ENCODE measurements at regions of chr1 and their contacts with region 1.

Region 1: GRCh38 chr1:22039594-22040285 is 12.8 kb upstream of the CDC42 start:
- H3K4me3 Mint-ChIP-seq: peak overlapping the region; percentile 51
- H3K27ac Mint-ChIP-seq: peak overlapping the region; percentile 86
- H3K4me1 Mint-ChIP-seq: peaks cover 48% of the 10 kb centered on the region
- H3K27me3 Mint-ChIP-seq: no peaks in the 10 kb centered on the region

Region 2: GRCh38 chr1:22074803-22075202 is 35.1 kb after region 1 on chr1:
- intact Hi-C with region 1: loop called (anchors 5 kb)
- H3K4me3 Mint-ChIP-seq: no peak overlapping the region
- H3K27ac Mint-ChIP-seq: peak overlapping the region; percentile 69
- H3K4me1 Mint-ChIP-seq: peaks cover 93% of the 10 kb centered on the region
- H3K27me3 Mint-ChIP-seq: no peaks in the 10 kb centered on the region